ENCODE measurements at regions of chr6 and their contacts with region 1.

Region 1: DNA sequence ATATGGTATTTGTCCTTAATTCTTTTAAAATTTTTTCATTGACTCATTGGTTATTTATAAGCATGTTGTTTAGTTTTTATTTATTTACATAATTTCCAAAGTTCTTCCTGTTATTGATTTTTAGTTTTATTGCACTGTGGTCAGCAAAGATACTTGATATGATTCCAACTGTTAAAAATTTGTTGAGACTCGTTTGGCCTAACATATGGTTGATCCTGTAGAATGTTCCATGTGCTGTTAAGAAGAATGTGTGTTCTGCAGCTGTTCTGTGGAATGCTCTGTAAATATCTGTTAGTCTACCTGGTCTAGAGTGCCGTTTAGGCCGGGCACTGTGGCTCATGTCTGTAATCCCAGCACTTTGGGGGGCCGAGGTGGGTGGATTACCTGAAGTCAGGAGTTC is 197.7 kb downstream of the CD109 start:
- DNase-seq: no peak
- ATAC-seq: no peak
- H3K4me3 Mint-ChIP-seq: no peak overlapping the region
- H3K27ac Mint-ChIP-seq: no peak overlapping the region
- H3K4me1 Mint-ChIP-seq: no peaks in the 10 kb centered on the region
- H3K27me3 Mint-ChIP-seq: peaks cover 1% of the 10 kb centered on the region
- CTCF ChIP-seq: no peak

Region 2: GRCh38 chr6:73879501-73880293 is 14.0 kb before region 1 on chr6:
- CTCF ChIA-PET with region 1: no interaction called
- POLR2A ChIA-PET with region 1: no interaction called
- intact Hi-C with region 1: loop called (anchors 1 kb)
- DNase-seq: no peak
- ATAC-seq: no peak
- H3K4me3 Mint-ChIP-seq: no peak overlapping the region
- H3K27ac Mint-ChIP-seq: no peak overlapping the region
- H3K4me1 Mint-ChIP-seq: no peaks in the 10 kb centered on the region
- H3K27me3 Mint-ChIP-seq: no peaks in the 10 kb centered on the region
- CTCF ChIP-seq: no peak

Measured in activated CD8-positive, alpha-beta T cell treated with anti-CD3 and anti-CD28 coated beads for 36 hours (primary cell).